ENCODE measurements at regions of chr22 and their contacts with region 1.

Region 1: DNA sequence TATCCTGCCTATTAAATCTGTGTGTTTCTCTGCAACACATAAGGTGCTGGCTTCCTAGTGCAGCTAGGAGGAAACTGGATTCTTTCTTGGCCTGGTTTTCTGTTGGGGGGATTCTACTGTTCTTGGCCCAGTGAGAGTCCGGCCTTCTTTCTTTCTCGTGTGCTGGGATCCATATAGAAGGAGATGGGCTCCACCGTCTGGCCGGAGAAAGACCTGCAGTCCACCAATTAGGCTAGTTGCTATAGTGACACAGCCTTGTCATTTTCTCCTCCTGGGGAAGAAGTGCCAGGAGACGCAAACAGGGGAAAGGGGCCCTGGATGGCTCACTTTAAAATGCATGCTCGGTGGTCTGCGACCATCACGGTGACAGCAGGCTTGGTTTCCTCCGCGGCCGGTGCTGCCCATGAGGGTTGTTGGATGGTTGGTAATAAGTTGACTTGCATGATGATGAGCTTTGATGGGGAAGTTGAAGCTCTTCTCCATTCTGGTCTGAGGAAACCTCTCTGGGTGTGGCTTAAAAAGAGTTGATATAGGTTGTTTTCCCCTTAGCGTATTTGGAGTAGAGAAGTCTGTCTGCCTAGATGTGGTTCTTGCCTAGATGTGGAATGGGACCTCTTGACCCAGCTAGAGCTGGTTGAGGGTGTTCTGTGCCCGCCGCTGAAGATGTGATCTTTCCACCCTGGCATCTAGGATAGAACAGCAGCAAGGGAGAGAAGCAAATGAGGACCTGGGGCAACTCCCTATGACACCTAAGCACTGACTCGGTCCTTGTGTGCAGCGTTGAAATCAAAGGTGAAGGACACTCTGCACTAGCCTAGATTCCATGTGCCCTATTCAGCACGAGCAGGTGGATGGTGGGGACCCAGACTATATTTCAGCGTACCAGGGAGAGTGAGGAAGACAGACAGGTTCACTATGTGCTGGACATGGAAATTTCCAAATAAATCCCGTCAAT is 1335.0 kb downstream of the BRD1 start:
- ATAC-seq: peak in 6 of 8 experiments; percentile 49 to 90 (median 70)
- H3K4me3 ChIP-seq: peak overlapping the region in 2 of 5 donors; percentile 10 to 85
- H3K27ac ChIP-seq: no peak overlapping the region
- H3K4me1 ChIP-seq: no peaks in the 10 kb centered on the region

Region 2: GRCh38 chr22:46803031-46803880 is 1689.4 kb before region 1 on chr22:
- in situ Hi-C with region 1: loop called in 1 of 9 experiments (anchors 25 kb)
- ATAC-seq: peak in 3 of 8 experiments; percentile 7 to 51 (median 13)
- H3K4me3 ChIP-seq: no peak overlapping the region
- H3K27ac ChIP-seq: no peak overlapping the region
- H3K4me1 ChIP-seq: peaks cover 0 to 3% of the 10 kb centered on the region in 2 donors